ENCODE measurements at regions of chr1 and their contacts with region 1.

Region 1: GRCh38 chr1:93190432-93190831 is 9.9 kb downstream of the CCDC18 start:
- DNase-seq: no peak
- ATAC-seq: no peak; the same call in 2 of the 3 replicates
- H3K4me3 ChIP-seq: no peak overlapping the region
- H3K27ac ChIP-seq: no peak overlapping the region
- H3K4me1 ChIP-seq: peaks cover 5% of the 10 kb centered on the region; the same call in 1 of the 2 replicates
- H3K27me3 ChIP-seq: no peaks in the 10 kb centered on the region
- CTCF ChIP-seq: no peak
- EP300 ChIP-seq: no peak
- POLR2A ChIP-seq: no peak
- RAD21 ChIP-seq: no peak

Region 2: DNA sequence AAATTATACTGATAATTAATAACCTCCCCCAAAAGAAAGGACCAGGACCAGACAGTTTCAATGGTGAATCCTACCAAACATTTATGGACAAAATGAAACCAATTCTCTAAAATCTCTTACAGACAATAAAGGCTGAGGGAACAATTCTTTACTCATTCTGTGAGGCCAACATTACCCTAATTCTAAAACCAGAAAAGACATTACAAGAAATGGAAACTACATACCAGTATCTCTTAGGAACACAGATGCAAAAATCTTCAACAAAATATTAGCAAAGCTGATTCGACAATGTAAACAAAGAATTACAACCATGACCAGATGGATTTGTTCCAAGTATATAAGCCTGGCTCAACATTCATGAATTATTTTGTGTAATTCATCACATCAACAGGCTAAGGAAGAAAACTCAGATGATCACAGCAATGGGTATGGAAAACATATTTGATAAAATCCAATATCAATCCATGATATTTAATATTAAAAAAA is 18.8 kb before region 1 on chr1:
- CTCF ChIA-PET with region 1: no interaction called
- POLR2A ChIA-PET with region 1: no interaction called
- RAD21 ChIA-PET with region 1: interaction called, 6 read pairs
- SMC1A ChIA-PET with region 1: interaction called, 10 read pairs
- in situ Hi-C with region 1: no loop called
- intact Hi-C with region 1: no loop called
- DNase-seq: no peak
- ATAC-seq: peak; percentile 28
- H3K4me3 ChIP-seq: peak overlapping the region; percentile 43
- H3K27ac ChIP-seq: peak overlapping the region; percentile 31; the same call in 1 of the 2 replicates
- H3K4me1 ChIP-seq: peaks cover 5% of the 10 kb centered on the region; the same call in 1 of the 2 replicates
- H3K27me3 ChIP-seq: no peaks in the 10 kb centered on the region
- CTCF ChIP-seq: no peak
- EP300 ChIP-seq: no peak
- POLR2A ChIP-seq: no peak
- RAD21 ChIP-seq: no peak

Region 3: GRCh38 chr1:93283496-93283895 is 93.1 kb after region 1 on chr1:
- CTCF ChIA-PET with region 1: no interaction called
- POLR2A ChIA-PET with region 1: no interaction called
- RAD21 ChIA-PET with region 1: no interaction called
- SMC1A ChIA-PET with region 1: no interaction called
- in situ Hi-C with region 1: no loop called
- intact Hi-C with region 1: no loop called
- DNase-seq: no peak
- ATAC-seq: no peak
- H3K4me3 ChIP-seq: no peak overlapping the region
- H3K27ac ChIP-seq: no peak overlapping the region
- H3K4me1 ChIP-seq: no peaks in the 10 kb centered on the region
- H3K27me3 ChIP-seq: no peaks in the 10 kb centered on the region
- CTCF ChIP-seq: no peak
- EP300 ChIP-seq: no peak
- POLR2A ChIP-seq: no peak
- RAD21 ChIP-seq: no peak

Measured in GM12878 (cell line).